Caco-2 (cell line): ENCODE measurements at regions of chr12 and their contacts with region 1.

Region 1: DNA sequence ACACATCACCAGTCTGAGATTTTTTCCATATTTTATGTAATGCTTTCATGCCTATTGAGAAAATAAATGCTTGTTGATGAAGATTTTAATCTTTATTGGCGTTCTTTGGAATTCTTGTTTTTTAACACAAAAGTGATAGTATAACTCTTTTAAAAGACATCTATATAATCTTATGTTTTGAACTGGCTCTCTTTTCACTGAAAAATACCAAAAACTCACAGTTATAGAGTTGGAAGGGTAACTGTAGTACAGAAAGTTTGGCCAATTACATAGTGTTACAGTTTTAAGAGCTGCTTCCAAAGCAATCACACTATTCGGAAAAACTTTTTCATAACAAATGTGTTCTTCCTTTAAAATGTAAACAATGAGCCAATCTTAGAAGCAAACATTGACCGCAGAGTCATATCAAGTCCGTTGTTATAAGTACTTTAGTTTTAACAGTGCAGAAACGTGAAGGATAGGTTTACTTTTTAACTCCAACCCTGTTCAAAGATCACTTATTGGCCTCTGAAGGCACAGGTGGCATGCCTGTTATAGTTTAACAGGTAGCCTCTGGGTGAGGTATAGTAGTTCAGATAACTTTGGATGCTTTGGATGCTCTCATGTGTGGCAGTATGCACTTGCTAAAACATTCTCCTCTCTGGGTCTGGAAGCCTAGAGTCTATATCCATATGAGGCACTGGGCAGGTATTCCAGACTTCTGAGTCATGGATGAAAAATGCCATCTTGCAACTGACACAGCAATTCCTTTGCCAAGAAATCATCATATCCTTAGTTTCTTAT is 12.1 kb upstream of the NTN4 start:
- DNase-seq: peak; percentile 78 to 80
- H3K4me3 ChIP-seq: no peak overlapping the region
- H3K4me3 Mint-ChIP-seq: peak overlapping the region; percentile 49
- H3K27ac Mint-ChIP-seq: peak overlapping the region; percentile 72
- H3K4me1 ChIP-seq: peaks cover 66% of the 10 kb centered on the region
- H3K4me1 Mint-ChIP-seq: peaks cover 35% of the 10 kb centered on the region
- H3K27me3 ChIP-seq: no peaks in the 10 kb centered on the region
- H3K27me3 Mint-ChIP-seq: no peaks in the 10 kb centered on the region
- CTCF ChIP-seq: no peak

Region 2: GRCh38 chr12:95790033-95790911 is 12.4 kb before region 1 on chr12 and contains the start of gene NTN4:
- CTCF ChIA-PET with region 1: no interaction called
- POLR2A ChIA-PET with region 1: no interaction called
- intact Hi-C with region 1: loop called (anchors 1 kb)
- DNase-seq: peak; percentile 58
- H3K4me3 ChIP-seq: peak within 1 kb of the TSS; percentile 89
- H3K4me3 Mint-ChIP-seq: peak within 1 kb of the TSS; percentile 97
- H3K27ac Mint-ChIP-seq: peak within 1 kb of the TSS; percentile 88
- H3K4me1 ChIP-seq: peaks cover 52% of the 10 kb centered on the region
- H3K4me1 Mint-ChIP-seq: peaks cover 5% of the 10 kb centered on the region
- H3K27me3 ChIP-seq: no peaks in the 10 kb centered on the region
- H3K27me3 Mint-ChIP-seq: no peaks in the 10 kb centered on the region
- CTCF ChIP-seq: no peak
- total RNA-seq, gene NTN4: 54.1 and 55.0 TPM in 2 replicates